CD8-positive, alpha-beta T cell (primary cell): ENCODE measurements at regions of chr11 and their contacts with region 1.

Region 1: GRCh38 chr11:47847892-47848635 is at the start of gene NUP160:
- DNase-seq: peak; percentile 70 to 92 (median 88)
- ATAC-seq: peak; percentile 87
- H3K4me3 ChIP-seq: peak within 1 kb of the TSS; percentile 89 to 99
- H3K4me3 Mint-ChIP-seq: peak within 1 kb of the TSS; percentile 100
- H3K27ac ChIP-seq: peak within 1 kb of the TSS; percentile 88 to 95
- H3K27ac Mint-ChIP-seq: peak within 1 kb of the TSS; percentile 99
- H3K4me1 ChIP-seq: peaks cover 35% of the 10 kb centered on the region
- H3K4me1 Mint-ChIP-seq: peaks cover 45% of the 10 kb centered on the region
- H3K27me3 ChIP-seq: no peaks in the 10 kb centered on the region
- H3K27me3 Mint-ChIP-seq: no peaks in the 10 kb centered on the region
- CTCF ChIP-seq: no peak
- total RNA-seq, gene NUP160: 38.6 to 46.6 TPM

Region 2: GRCh38 chr11:46936138-46937110 is 911.6 kb before region 1 on chr11 and contains the start of gene CSTPP1:
- CTCF ChIA-PET with region 1: no interaction called
- POLR2A ChIA-PET with region 1: no interaction called
- intact Hi-C with region 1: loop called in 1 of 2 experiments (anchors 5 kb)
- DNase-seq: peak; percentile 80 to 97 (median 93)
- ATAC-seq: peak; percentile 96
- H3K4me3 ChIP-seq: peak within 1 kb of the TSS; percentile 73 to 82
- H3K4me3 Mint-ChIP-seq: peak within 1 kb of the TSS; percentile 97
- H3K27ac ChIP-seq: peak within 1 kb of the TSS; percentile 58 to 71
- H3K27ac Mint-ChIP-seq: peak within 1 kb of the TSS; percentile 95
- H3K4me1 ChIP-seq: peaks cover 9% of the 10 kb centered on the region
- H3K4me1 Mint-ChIP-seq: peaks cover 20% of the 10 kb centered on the region
- H3K27me3 ChIP-seq: no peaks in the 10 kb centered on the region
- H3K27me3 Mint-ChIP-seq: peaks cover 6% of the 10 kb centered on the region
- CTCF ChIP-seq: no peak
- total RNA-seq, gene CSTPP1: 4.1 to 4.6 TPM

Region 3: GRCh38 chr11:47583844-47584243 is 264.2 kb before region 1 on chr11:
- CTCF ChIA-PET with region 1: no interaction called
- POLR2A ChIA-PET with region 1: interaction called, 3 read pairs
- intact Hi-C with region 1: loop called in 1 of 2 experiments (anchors 5 kb)
- DNase-seq: no peak
- ATAC-seq: no peak
- H3K4me3 ChIP-seq: no peak overlapping the region
- H3K4me3 Mint-ChIP-seq: no peak overlapping the region
- H3K27ac ChIP-seq: no peak overlapping the region
- H3K27ac Mint-ChIP-seq: no peak overlapping the region
- H3K4me1 ChIP-seq: peaks cover 16% of the 10 kb centered on the region
- H3K4me1 Mint-ChIP-seq: peaks cover 25% of the 10 kb centered on the region
- H3K27me3 ChIP-seq: no peaks in the 10 kb centered on the region
- H3K27me3 Mint-ChIP-seq: no peaks in the 10 kb centered on the region
- CTCF ChIP-seq: no peak

Region 4: GRCh38 chr11:47715082-47715669 is 132.9 kb before region 1 on chr11 and contains the start of gene AGBL2:
- CTCF ChIA-PET with region 1: interaction called, 3 read pairs
- POLR2A ChIA-PET with region 1: interaction called, 7 read pairs
- intact Hi-C with region 1: loop called in 1 of 2 experiments (anchors 2 kb)
- DNase-seq: peak; percentile 70 to 91 (median 86)
- ATAC-seq: peak; percentile 99
- H3K4me3 ChIP-seq: peak within 1 kb of the TSS; percentile 66 to 88
- H3K4me3 Mint-ChIP-seq: peak within 1 kb of the TSS; percentile 96
- H3K27ac ChIP-seq: peak within 1 kb of the TSS; percentile 81 to 88
- H3K27ac Mint-ChIP-seq: peak within 1 kb of the TSS; percentile 94
- H3K4me1 ChIP-seq: peaks cover 14% of the 10 kb centered on the region
- H3K4me1 Mint-ChIP-seq: peaks cover 21% of the 10 kb centered on the region
- H3K27me3 ChIP-seq: no peaks in the 10 kb centered on the region
- H3K27me3 Mint-ChIP-seq: no peaks in the 10 kb centered on the region
- CTCF ChIP-seq: no peak
- total RNA-seq, gene AGBL2: 3.6 to 5.0 TPM

Region 5: GRCh38 chr11:49151211-49151610 is 1303.1 kb after region 1 on chr11:
- CTCF ChIA-PET with region 1: no interaction called
- POLR2A ChIA-PET with region 1: no interaction called
- intact Hi-C with region 1: no loop called
- DNase-seq: no peak
- ATAC-seq: no peak
- H3K4me3 ChIP-seq: no peak overlapping the region
- H3K4me3 Mint-ChIP-seq: no peak overlapping the region
- H3K27ac ChIP-seq: no peak overlapping the region
- H3K27ac Mint-ChIP-seq: no peak overlapping the region
- H3K4me1 ChIP-seq: no peaks in the 10 kb centered on the region
- H3K4me1 Mint-ChIP-seq: no peaks in the 10 kb centered on the region
- H3K27me3 ChIP-seq: no peaks in the 10 kb centered on the region
- H3K27me3 Mint-ChIP-seq: no peaks in the 10 kb centered on the region
- CTCF ChIP-seq: no peak